ENCODE measurements at regions of chr12 and their contacts with region 1.

Region 1: GRCh38 chr12:130916251-130916911 is 37.3 kb upstream of the ADGRD1 start:
- DNase-seq: no peak
- ATAC-seq: peak; percentile 69

Region 2: GRCh38 chr12:130871286-130872178 is 44.8 kb before region 1 on chr12 and contains the start of gene RAN:
- intact Hi-C with region 1: no loop called
- DNase-seq: peak; percentile 96
- ATAC-seq: peak; percentile 94
- total RNA-seq, gene RAN: 253 TPM

Region 3: DNA sequence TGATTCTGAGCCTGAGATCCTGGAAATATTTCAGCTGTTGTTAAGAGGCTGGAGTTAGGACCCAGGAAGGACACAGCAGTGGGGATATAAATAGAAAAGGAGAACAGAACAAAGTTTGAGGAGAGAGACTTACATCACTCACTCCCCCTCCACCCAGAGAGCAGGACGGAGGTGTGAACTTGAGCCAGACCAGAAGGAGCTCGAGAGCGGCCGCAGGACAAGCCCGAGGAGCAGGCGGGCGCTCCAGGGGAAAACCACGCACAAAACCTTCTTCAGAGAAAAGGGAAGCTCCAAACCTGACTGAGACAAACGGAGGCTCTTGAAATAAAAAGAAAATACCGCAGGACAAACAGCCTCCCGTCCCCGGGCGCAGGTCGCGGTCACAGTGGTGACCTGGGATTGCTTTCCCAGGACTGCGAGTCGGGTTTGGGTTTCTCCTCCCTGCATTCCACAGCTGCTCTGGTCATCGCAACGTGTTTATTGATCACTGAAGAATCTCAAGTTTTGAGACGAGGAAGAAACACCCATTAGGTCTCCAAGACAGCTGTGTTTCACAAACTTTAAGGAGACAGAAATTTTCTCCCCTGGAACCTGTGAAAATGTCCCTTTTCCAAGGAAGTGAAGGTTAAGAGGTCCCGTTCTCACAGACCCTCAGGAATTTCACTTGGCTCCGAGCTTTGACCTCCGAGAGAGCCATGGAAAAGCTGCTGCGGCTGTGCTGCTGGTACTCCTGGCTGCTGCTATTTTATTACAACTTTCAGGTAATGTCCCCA is 37.6 kb after region 1 on chr12 and contains the start of gene ADGRD1:
- intact Hi-C with region 1: loop called (anchors 2 kb)
- DNase-seq: no peak
- ATAC-seq: peak; percentile 91
- total RNA-seq, gene ADGRD1: 89.1 TPM

Region 4: GRCh38 chr12:131132118-131132892 is 215.9 kb after region 1 on chr12:
- intact Hi-C with region 1: loop called (anchors 2 kb)
- DNase-seq: no peak
- ATAC-seq: peak; percentile 56

Region 5: GRCh38 chr12:131454418-131455217 is 538.2 kb after region 1 on chr12:
- intact Hi-C with region 1: loop called (anchors 10 kb)
- DNase-seq: no peak
- ATAC-seq: peak; percentile 63